ENCODE measurements at regions of chr3 and their contacts with region 1.

Region 1: DNA sequence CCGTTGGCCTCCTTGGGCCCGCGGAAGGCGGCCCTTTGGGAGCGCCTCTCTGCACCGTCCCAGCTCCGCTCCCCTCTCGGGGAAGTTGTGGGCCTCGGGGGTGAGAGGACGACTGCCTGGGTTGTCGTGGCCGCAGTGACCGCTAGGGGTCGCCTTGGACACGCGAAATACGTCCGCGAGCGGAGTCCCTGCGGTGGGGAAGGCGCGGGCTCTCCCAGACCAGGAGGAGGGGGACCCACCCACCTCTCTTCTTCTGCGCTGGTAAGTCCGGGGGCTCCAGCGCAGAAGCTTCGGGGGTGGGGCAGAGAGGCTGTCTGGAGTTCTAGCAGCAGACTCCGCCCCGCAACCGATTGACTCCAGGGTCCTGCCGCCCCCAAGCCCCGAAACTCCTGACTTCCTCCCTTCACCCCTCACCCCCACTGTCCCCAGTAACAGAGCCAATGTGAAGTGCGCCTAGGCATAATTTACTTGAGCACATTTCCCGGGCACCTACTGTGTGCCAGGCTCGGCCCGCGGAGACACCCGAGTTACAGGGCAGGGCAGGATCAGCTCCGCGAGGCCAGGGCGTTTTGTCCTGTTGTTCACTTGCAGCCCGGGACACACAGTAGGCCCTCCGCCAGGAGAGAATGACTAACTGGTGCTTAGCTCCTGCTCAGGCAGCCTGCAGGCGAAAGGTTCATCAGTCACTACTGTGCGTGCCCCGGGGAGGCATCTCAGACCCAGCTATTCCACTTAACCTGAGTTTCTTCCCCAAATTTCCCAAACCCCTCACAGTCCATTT is 32.8 kb downstream of the DNASE1L3 start:
- DNase-seq: peak; percentile 98
- ATAC-seq: peak; percentile 90

Region 2: GRCh38 chr3:58008140-58009025 is 169.6 kb before region 1 on chr3 and contains the start of gene FLNB:
- intact Hi-C with region 1: loop called (anchors 5 kb)
- DNase-seq: peak; percentile 81
- ATAC-seq: peak; percentile 82
- total RNA-seq, gene FLNB: 514 TPM

Region 3: DNA sequence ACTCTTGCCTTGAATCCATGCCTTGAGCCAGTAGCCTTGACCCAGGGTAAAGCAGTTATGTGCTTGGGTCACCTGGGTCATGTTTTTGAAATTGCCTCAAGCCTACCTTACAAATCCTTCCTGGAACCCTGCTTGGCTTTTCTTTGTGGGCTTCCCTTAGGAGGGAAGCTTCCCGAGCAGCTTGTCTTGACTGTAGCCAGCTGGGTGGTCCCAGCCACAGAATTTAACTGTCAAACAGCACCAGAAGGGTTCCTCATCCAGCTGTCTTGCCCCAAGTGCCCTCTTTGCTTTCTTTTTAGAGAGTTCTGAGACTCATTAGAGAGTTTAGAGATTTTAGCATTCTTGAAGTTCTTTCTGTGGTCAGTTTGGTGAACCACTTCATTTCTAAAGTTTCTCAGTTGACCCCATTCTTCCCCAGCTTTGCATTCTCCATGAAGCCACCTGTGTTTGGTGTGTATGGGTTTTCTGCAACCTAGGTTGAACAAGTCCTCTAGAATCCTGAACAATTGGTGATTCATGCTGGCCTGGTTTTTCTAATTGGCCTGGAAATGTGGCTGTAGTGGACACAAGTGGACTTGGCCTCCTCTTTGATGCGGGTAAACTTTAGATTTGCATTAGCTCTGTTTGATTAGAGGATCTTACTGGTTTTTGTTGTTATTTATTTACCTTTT is 136.1 kb before region 1 on chr3:
- intact Hi-C with region 1: no loop called
- DNase-seq: no peak
- ATAC-seq: peak; percentile 9

Region 4: DNA sequence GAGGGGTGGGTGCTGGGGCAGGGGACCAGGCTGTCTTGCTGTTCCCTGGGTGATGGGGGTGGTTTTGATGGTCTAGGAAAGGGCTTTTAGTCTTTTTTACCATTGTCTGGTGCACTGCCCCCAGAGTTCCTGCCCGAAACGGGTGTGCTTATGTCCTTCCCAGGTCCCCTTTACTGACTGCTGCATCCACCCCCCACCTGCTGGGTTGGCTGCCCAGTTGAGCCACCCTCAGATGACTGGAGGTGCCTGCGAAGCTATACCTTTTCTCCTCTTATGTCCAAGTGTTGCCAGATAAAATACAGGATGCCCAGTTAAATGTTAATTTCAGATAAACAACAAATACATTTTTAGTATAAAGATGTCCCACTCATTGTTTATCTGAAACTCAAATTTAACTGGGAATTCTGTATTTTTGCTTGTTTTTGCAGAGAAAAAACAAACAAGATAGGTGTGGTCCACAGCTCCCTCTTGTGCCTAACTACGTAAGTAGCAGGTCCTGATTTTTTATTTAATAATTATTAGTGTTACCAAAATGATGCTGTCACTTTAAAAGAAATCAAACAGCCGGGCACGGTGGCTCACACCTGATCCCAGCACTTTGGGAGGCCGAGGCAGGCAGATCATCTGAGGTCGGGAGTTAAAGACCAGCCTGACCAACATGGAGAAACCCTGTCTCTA is 122.0 kb after region 1 on chr3:
- intact Hi-C with region 1: loop called (anchors 5 kb)
- DNase-seq: no peak
- ATAC-seq: no peak